Psoas muscle (tissue), 8 donors: ENCODE measurements at regions of chr20 and their contacts with region 1.

Region 1: DNA sequence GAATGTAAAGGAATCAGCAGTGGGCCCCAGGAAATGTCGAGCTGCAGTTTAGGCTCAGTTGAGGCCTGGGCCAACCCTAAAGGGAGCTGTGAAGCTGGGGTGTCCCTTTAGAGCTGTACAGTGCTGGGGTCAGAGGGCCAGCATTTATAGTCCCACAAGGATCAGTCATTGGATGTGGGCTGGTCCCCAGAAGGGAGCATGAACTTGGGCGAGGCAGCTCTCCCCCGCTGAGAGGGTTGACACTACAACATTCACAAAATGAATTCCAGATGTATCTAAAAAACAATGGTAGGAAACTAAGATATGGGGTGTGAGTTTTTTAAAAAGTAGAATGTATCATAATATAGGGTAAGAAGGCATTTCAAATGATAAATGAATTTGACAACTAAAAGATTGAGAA is 29.7 kb upstream of the TMX4 start:
- DNase-seq: no peak
- ATAC-seq: no peak
- H3K4me3 ChIP-seq: no peak overlapping the region
- H3K27ac ChIP-seq: no peak overlapping the region
- H3K4me1 ChIP-seq: no peaks in the 10 kb centered on the region
- H3K27me3 ChIP-seq: peaks cover 0 to 2% (median 0%) of the 10 kb centered on the region in 3 donors
- CTCF ChIP-seq: no peak

Region 2: DNA sequence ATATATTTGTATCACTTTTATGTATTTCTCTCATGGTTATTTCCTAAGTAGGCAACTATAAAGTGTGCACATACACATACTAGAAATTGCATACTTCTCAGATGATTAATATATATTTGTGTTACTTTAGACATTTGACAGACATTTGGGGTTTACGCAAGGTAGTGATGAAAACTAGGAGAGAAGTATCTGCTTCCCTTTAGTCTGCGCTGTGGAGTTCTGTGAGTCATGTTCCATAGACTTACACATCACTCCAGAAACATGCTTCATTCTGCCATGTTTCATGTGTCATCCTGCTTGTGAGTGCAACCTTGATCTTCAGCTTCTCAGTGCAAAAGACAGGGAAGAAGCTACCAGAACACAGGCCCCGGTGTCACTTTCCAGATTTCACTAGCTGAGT is 1482.5 kb before region 1 on chr20:
- intact Hi-C with region 1: no loop called
- DNase-seq: no peak
- ATAC-seq: no peak
- H3K4me3 ChIP-seq: no peak overlapping the region
- H3K27ac ChIP-seq: no peak overlapping the region
- H3K4me1 ChIP-seq: no peaks in the 10 kb centered on the region
- H3K27me3 ChIP-seq: no peaks in the 10 kb centered on the region
- CTCF ChIP-seq: no peak

Region 3: GRCh38 chr20:7959484-7959883 is 89.8 kb before region 1 on chr20:
- intact Hi-C with region 1: no loop called
- DNase-seq: no peak
- ATAC-seq: no peak
- H3K4me3 ChIP-seq: no peak overlapping the region
- H3K27ac ChIP-seq: no peak overlapping the region
- H3K4me1 ChIP-seq: no peaks in the 10 kb centered on the region
- H3K27me3 ChIP-seq: no peaks in the 10 kb centered on the region
- CTCF ChIP-seq: no peak

Region 4: DNA sequence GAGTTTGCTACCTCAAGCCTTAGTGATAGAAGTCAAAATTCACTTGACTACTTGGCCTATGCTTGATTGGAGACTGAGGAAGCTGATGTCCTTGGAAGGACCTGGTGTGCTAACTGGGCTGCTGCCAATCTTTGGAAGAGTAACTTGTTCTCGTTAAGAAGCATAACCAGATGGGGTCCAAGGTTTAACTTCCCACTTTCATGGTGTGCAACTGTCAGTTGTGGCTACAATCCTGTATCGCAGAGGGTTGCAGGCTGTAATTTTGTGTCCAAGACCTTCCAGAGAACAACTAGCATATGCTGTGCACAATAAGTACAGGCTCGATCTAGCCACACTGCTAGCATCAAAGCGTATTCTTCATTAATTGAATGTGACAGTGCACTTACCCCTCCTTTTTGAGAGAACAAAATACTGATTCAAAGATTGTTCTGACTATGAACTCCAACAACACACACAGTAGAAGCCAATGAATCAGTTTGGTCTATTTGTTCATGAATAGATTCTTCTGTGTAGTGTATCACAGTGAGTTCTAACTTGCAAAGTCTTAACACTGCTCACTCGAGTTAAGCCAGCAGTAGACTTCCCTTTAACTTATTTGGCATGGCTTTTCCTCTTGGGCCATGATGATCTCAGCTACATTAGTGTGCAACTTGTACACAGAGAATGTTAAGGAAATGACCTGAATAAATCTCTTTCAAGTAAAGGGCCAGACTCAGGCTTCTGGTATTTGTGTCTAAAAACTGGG is 66.9 kb after region 1 on chr20:
- intact Hi-C with region 1: loop called in 1 of 2 experiments (anchors 5 kb)
- DNase-seq: no peak
- ATAC-seq: no peak
- H3K4me3 ChIP-seq: no peak overlapping the region
- H3K27ac ChIP-seq: no peak overlapping the region
- H3K4me1 ChIP-seq: no peaks in the 10 kb centered on the region
- H3K27me3 ChIP-seq: no peaks in the 10 kb centered on the region
- CTCF ChIP-seq: no peak

Region 5: DNA sequence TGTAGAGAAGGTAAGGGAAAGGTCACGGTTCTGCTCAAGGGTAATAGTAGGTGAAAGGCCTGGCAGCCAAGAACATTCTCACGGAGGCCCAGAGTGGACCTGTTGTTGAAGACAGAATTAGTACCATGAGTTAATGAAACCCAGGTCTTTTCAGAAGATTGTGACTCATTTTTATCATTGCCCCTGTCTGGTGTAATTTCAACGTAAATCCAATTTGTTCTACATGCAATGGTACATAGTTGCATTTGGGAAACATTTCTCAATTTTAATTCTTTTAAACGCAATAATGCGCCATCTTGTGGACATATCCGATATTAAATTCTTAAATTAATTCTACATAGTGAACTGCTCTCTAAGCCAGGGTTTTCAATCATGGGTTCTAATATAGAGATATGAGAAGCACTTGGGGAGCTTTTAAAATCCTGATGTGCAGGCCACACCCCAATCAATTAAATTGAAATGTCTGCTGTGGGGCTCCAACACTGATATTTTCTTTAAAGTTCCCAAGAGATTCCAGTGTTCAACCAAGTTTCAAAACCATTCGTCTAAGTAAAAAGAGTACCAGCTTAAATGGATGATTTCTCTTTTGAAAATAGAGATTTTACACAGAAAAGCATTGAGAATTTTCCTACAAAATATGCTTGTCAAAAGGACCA is 340.2 kb after region 1 on chr20:
- intact Hi-C with region 1: loop called (anchors 2 to 5 kb)
- DNase-seq: no peak
- ATAC-seq: peak in 3 of 4 donors; percentile 42 to 79 (median 66)
- H3K4me3 ChIP-seq: peak overlapping the region; percentile 37
- H3K27ac ChIP-seq: no peak overlapping the region
- H3K4me1 ChIP-seq: peaks cover 27% of the 10 kb centered on the region
- H3K27me3 ChIP-seq: no peaks in the 10 kb centered on the region
- CTCF ChIP-seq: peak; percentile 62